Endothelial cell of umbilical vein (primary cell): ENCODE measurements at regions of chr9 and their contacts with region 1.

Region 1: DNA sequence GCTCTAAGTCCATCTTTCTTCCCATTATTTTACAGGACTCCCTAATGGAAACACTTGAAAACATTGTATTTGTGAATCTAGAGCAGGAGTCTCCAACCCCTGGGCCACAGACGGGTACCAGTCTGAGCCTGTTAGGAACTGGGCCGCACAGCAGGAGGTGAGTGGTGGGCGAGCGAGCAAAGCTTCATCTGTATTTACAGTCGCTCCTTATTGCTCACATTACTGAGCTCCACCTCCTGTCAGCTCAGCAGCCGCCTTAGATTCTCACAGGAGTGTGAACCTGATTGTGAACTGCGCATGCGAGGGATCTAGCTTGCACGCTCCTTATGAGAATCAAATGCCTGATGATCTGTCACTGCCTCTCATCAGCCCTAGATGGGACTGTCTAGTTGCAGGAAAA is 111.0 kb downstream of the MED27 start:
- DNase-seq: no peak
- H3K4me3 ChIP-seq: no peak overlapping the region
- H3K27ac ChIP-seq: no peak overlapping the region
- H3K4me1 ChIP-seq: no peaks in the 10 kb centered on the region
- H3K27me3 ChIP-seq: no peaks in the 10 kb centered on the region
- CTCF ChIP-seq: no peak
- POLR2A ChIP-seq: no peak

Region 2: GRCh38 chr9:131982671-131983239 is 14.1 kb after region 1 on chr9:
- CTCF ChIA-PET with region 1: interaction called, 10 read pairs
- POLR2A ChIA-PET with region 1: no interaction called
- dilution Hi-C with region 1: no loop called
- intact Hi-C with region 1: no loop called
- DNase-seq: no peak
- H3K4me3 ChIP-seq: no peak overlapping the region
- H3K27ac ChIP-seq: no peak overlapping the region
- H3K4me1 ChIP-seq: peaks cover 21% of the 10 kb centered on the region
- H3K27me3 ChIP-seq: no peaks in the 10 kb centered on the region
- CTCF ChIP-seq: no peak
- POLR2A ChIP-seq: no peak